Prostate gland (tissue), 2 donors: ENCODE measurements at regions of chr16 and their contacts with region 1.

Region 1: GRCh38 chr16:4253394-4254150 is 11.7 kb upstream of the SRL start:
- DNase-seq: peak; percentile 100
- H3K4me3 ChIP-seq: peak overlapping the region; percentile 43 to 47
- H3K27ac ChIP-seq: peak overlapping the region; percentile 84 to 92
- H3K4me1 ChIP-seq: no peaks in the 10 kb centered on the region
- H3K27me3 ChIP-seq: no peaks in the 10 kb centered on the region
- CTCF ChIP-seq: no peak
- POLR2A ChIP-seq: peak; percentile 86

Region 2: DNA sequence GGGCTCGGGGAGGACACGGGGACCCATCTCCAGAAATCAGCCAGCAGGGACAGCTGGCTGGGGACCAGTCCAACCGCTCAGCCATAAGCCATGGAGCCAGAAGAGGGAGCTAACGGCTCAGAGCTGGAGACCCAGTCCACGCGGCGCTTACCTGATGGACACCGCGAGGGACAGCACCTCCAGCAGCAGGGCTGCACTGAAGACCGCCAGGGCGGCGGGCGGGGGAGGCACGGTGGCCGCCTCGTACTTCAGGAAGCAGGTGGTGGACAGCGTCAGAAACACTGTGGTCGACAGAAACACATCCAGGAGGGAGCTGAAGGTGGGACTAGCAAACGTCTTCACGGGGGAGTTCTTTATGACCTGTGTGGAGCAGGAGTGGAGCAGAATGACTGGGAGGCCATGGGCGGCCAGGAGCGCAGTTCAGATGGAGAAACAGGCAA is 270.5 kb before region 1 on chr16:
- intact Hi-C with region 1: loop called (anchors 5 kb)
- DNase-seq: peak; percentile 79
- H3K4me3 ChIP-seq: no peak overlapping the region
- H3K27ac ChIP-seq: no peak overlapping the region
- H3K4me1 ChIP-seq: no peaks in the 10 kb centered on the region
- H3K27me3 ChIP-seq: no peaks in the 10 kb centered on the region
- CTCF ChIP-seq: peak in 3 of 4 experiments; percentile 74 to 88 (median 85)
- POLR2A ChIP-seq: no peak

Region 3: DNA sequence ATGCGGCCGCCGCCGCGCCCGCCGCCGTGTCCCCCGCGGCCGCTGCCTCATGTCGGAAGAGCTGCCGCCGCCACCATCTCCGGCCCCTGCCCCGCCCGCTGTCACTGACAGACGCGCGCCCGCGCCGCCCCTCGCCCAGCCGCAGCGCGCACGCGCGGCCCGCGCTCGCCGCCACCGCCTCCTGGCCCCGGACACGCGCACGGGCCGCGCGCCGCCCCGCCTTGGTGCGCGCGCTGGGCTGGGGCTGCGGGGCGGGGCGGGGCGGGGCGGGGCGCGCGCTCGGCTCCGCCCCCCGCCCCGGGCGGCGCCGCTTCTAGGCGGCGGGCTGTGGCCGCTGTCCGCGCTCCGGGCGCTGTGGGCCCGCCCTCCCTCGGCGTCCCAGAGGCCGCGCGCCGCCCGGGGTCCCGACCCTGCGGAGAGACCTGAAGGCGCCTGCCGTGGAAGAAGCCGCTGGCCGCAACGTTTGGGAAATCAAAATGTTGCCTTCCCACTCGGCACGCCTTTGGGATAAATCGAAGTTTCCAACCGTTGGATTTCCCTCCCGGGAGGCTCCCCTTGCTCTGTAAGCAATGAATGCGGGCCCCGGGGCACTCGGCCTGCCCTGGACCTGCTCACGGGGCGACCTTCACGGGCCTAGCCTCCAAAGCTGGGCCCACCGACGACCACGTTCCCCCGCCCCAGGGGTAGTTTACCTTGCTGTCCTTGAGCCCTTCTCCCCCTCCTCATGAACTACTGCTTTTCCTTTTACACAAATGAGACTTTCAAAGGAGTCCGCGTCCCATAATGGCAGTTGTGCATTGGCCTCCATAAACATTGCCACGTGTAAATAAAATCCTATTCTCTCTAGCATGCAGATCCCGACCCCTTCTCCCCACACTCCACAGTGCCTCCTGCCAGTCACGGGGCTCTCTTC is 137.0 kb before region 1 on chr16 and contains the start of gene ADCY9:
- intact Hi-C with region 1: loop called (anchors 2 kb)
- DNase-seq: peak; percentile 75
- H3K4me3 ChIP-seq: peak within 1 kb of the TSS; percentile 44 to 49
- H3K27ac ChIP-seq: peak within 1 kb of the TSS; percentile 47 to 60
- H3K4me1 ChIP-seq: no peaks in the 10 kb centered on the region
- H3K27me3 ChIP-seq: no peaks in the 10 kb centered on the region
- CTCF ChIP-seq: peak in 1 of 4 experiments; percentile 8
- POLR2A ChIP-seq: peak; percentile 32
- total RNA-seq, gene ADCY9: 7.2 to 58.3 TPM

Region 4: GRCh38 chr16:4200000-4200780 is 53.4 kb before region 1 on chr16:
- intact Hi-C with region 1: loop called (anchors 2 kb)
- DNase-seq: peak; percentile 69
- H3K4me3 ChIP-seq: no peak overlapping the region
- H3K27ac ChIP-seq: no peak overlapping the region
- H3K4me1 ChIP-seq: no peaks in the 10 kb centered on the region
- H3K27me3 ChIP-seq: no peaks in the 10 kb centered on the region
- CTCF ChIP-seq: peak; percentile 38 to 87 (median 70)
- POLR2A ChIP-seq: no peak

Region 5: GRCh38 chr16:4217204-4218131 is 36.1 kb before region 1 on chr16:
- intact Hi-C with region 1: loop called (anchors 5 kb)
- DNase-seq: peak; percentile 59
- H3K4me3 ChIP-seq: no peak overlapping the region
- H3K27ac ChIP-seq: peak overlapping the region; percentile 33 to 66
- H3K4me1 ChIP-seq: peaks cover 9% of the 10 kb centered on the region
- H3K27me3 ChIP-seq: no peaks in the 10 kb centered on the region
- CTCF ChIP-seq: no peak
- POLR2A ChIP-seq: peak; percentile 22

Region 6: GRCh38 chr16:4550591-4550990 is 297.0 kb after region 1 on chr16:
- intact Hi-C with region 1: no loop called
- DNase-seq: no peak
- H3K4me3 ChIP-seq: no peak overlapping the region
- H3K27ac ChIP-seq: no peak overlapping the region
- H3K4me1 ChIP-seq: no peaks in the 10 kb centered on the region
- H3K27me3 ChIP-seq: no peaks in the 10 kb centered on the region
- CTCF ChIP-seq: no peak
- POLR2A ChIP-seq: no peak